Activated CD4-positive, alpha-beta T cell treated with anti-CD3 and anti-CD28 coated beads for 36 hours (primary cell): ENCODE measurements at regions of chr5 and their contacts with region 1.

Region 1: GRCh38 chr5:132180134-132180745 is 47.4 kb downstream of the P4HA2 start:
- DNase-seq: peak; percentile 19
- ATAC-seq: peak; percentile 38
- H3K4me3 Mint-ChIP-seq: no peak overlapping the region
- H3K27ac Mint-ChIP-seq: peak overlapping the region; percentile 73
- H3K4me1 Mint-ChIP-seq: peaks cover 36% of the 10 kb centered on the region
- H3K27me3 Mint-ChIP-seq: no peaks in the 10 kb centered on the region

Region 2: DNA sequence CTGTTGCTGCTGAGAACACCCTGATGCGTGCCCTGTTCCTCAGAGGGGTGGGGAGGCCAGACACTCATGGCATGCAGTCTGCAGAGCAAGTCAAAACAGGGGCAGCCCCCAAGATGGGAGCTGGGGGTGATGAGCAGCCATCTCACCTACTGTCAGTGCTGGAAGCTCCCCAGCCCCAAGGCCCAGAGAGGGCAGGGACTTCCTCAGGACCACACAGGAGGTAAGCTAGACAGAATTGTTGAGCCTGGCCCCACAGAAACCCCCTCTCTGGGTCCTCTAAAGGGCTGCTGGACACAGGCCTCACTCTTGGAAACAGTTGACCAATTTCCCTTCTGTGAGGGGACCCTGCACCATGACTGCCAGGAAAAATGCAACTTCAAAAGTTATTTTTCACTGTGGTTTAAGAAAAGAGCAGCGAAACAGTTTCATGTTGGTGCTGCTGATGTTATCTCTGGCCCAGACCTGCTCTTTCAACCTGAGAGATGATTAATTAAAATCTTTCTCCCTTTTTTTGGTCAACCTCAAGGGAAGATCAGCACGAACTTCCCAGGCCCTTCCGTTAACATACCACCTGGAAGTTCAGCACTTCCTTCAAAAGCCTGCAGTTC is 97.1 kb before region 1 on chr5:
- CTCF ChIA-PET with region 1: no interaction called
- POLR2A ChIA-PET with region 1: no interaction called
- intact Hi-C with region 1: no loop called
- DNase-seq: peak; percentile 76
- ATAC-seq: peak; percentile 91
- H3K4me3 Mint-ChIP-seq: peak overlapping the region; percentile 14
- H3K27ac Mint-ChIP-seq: peak overlapping the region; percentile 29
- H3K4me1 Mint-ChIP-seq: peaks cover 45% of the 10 kb centered on the region
- H3K27me3 Mint-ChIP-seq: peaks cover 5% of the 10 kb centered on the region

Region 3: DNA sequence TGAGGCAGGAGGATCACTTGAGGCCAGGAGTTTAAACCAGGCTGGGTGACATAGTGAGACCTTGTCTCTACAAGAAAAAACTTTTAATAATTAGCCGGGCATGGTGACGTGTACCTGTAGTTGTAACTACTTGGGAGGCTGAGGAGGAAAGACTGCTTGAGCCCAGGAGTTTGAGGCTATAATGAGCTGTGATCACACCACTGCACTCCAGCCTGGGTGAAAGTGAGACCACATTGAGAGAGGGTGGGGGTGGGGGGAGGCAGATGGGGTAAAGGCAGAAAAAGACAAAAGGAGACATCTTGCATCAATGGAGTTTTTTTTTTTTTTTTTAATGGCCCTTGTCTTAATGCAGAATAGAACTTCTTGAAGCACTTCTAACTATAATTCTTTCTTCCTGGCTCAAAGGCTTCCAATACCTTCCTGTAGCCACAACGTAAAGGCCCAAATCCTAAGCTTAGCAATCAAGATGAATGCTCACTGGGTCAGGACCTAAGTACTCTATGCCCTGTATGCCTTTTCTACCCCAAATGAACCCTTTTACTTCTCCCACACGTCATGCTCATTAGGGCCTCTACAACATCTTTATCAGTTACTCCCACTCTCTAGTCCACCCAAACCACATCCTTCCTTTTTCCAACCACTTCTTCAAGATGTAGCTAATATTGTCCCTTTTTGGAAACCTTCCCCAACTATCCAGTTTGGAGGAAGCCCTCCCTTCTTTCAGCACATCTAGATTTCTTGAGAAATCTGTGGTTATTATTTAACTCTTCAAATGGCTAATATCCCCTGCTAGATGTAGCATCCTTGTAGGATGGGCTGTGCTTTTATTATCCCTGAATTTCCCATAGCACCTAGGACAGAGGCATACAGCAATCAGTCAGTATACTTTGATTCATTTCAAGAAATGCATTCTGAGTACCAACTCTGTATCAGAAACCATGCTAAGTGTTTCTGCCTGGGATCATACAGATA is 65.8 kb before region 1 on chr5:
- CTCF ChIA-PET with region 1: interaction called, 3 read pairs
- POLR2A ChIA-PET with region 1: no interaction called
- intact Hi-C with region 1: loop called in 1 of 2 experiments (anchors 2 kb)
- DNase-seq: no peak
- ATAC-seq: peak; percentile 78
- H3K4me3 Mint-ChIP-seq: no peak overlapping the region
- H3K27ac Mint-ChIP-seq: peak overlapping the region; percentile 2
- H3K4me1 Mint-ChIP-seq: peaks cover 60% of the 10 kb centered on the region
- H3K27me3 Mint-ChIP-seq: no peaks in the 10 kb centered on the region

Region 4: DNA sequence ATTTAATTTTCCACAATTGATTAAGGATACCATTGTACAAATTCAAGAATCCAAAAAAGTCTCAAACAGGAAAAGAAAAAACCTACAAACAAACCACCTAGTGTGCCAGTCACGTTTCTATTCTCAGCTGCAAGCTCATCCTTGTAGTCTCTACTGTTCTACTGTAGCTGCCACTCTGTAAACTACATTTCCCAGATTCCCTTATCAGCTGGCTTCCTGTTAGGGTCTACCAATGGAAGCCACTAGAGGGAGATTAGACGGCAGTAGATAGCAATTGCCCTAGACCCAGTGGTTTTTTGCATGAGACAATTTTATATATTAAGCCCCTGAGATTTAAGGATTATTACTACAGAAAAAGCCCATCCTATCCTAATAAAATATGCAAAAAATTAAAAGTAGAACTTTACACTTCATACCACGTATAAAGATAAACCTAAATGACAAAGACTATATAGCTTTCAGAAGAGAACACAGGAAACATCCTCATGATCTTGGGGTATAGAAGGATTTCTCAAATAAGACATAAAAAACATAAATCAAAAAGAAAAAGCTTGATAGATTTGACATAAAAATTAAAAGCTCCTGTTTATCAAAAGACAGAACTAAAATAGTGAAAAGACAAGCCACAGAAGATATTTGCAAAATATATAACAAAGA is 10.0 kb after region 1 on chr5:
- CTCF ChIA-PET with region 1: interaction called, 34 read pairs
- POLR2A ChIA-PET with region 1: no interaction called
- intact Hi-C with region 1: no loop called
- DNase-seq: peak; percentile 17
- ATAC-seq: peak; percentile 100
- H3K4me3 Mint-ChIP-seq: no peak overlapping the region
- H3K27ac Mint-ChIP-seq: no peak overlapping the region
- H3K4me1 Mint-ChIP-seq: no peaks in the 10 kb centered on the region
- H3K27me3 Mint-ChIP-seq: peaks cover 9% of the 10 kb centered on the region

Region 5: DNA sequence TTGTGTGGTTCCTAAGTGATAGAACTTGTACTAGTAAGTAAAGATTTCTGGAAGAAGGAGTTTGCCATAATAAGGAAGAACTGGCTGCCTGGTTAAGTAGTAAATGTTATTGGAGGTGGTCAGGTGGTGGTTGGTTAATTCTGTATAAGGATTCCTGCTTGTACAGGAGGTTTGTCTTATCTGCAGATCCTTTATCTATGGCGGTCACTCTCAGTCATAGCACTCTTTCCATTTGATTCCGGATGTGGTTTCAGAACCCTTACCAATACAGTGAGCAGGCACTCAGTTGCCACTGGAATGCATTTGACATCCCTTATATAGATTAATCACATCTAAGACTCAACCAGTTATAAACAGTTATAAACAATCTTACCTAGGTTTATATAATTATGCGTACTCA is 426.9 kb after region 1 on chr5:
- CTCF ChIA-PET with region 1: no interaction called
- POLR2A ChIA-PET with region 1: no interaction called
- intact Hi-C with region 1: no loop called
- DNase-seq: no peak
- ATAC-seq: no peak
- H3K4me3 Mint-ChIP-seq: no peak overlapping the region
- H3K27ac Mint-ChIP-seq: no peak overlapping the region
- H3K4me1 Mint-ChIP-seq: no peaks in the 10 kb centered on the region
- H3K27me3 Mint-ChIP-seq: no peaks in the 10 kb centered on the region